ENCODE measurements at regions of chr6 and their contacts with region 1.

Region 1: DNA sequence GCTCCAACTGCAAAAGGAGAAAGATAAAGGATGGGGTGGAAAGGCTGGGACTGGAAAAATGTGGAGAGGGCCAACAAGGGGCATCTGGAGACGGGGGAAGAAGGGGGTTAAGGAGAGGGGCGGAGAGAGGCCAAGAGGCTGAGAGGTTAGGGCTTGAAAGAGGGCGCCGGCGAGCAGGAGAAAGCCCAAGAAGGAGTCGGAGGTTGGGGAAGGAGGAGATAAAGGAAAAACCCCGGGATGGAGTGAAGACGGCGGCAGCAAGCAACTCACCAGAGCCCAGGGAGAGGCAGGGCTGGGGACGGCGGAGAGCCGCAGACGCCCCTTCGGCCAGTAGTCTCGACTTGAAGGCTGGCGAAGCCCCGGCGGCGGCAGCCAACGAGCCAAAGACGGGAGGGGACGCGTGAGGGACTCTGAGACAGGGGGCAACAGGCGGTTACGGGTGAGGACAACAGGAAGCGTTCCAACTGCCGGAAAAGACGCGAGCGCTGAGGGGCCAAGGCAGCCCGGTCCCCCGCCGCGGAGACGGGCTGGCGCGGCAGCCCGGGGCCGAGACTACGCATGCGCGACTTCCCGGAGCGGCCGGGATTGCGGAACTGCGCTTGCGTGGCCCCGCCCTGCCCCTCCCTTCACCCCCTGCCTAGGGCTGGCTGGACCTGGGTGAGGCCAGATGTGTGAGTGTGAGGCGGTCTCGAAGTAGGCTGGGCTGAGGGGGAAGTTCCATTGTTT is at the start of gene STK38:
- DNase-seq: peak; percentile 95 to 98
- ATAC-seq: peak; percentile 97
- H3K4me3 ChIP-seq: peak within 1 kb of the TSS; percentile 55 to 86
- H3K27ac ChIP-seq: peak within 1 kb of the TSS; percentile 68 to 94
- H3K4me1 ChIP-seq: peaks cover 0 to 7% of the 10 kb centered on the region in 2 donors
- H3K27me3 ChIP-seq: no peaks in the 10 kb centered on the region
- total RNA-seq, gene STK38: 25.2 to 38.0 TPM

Region 2: DNA sequence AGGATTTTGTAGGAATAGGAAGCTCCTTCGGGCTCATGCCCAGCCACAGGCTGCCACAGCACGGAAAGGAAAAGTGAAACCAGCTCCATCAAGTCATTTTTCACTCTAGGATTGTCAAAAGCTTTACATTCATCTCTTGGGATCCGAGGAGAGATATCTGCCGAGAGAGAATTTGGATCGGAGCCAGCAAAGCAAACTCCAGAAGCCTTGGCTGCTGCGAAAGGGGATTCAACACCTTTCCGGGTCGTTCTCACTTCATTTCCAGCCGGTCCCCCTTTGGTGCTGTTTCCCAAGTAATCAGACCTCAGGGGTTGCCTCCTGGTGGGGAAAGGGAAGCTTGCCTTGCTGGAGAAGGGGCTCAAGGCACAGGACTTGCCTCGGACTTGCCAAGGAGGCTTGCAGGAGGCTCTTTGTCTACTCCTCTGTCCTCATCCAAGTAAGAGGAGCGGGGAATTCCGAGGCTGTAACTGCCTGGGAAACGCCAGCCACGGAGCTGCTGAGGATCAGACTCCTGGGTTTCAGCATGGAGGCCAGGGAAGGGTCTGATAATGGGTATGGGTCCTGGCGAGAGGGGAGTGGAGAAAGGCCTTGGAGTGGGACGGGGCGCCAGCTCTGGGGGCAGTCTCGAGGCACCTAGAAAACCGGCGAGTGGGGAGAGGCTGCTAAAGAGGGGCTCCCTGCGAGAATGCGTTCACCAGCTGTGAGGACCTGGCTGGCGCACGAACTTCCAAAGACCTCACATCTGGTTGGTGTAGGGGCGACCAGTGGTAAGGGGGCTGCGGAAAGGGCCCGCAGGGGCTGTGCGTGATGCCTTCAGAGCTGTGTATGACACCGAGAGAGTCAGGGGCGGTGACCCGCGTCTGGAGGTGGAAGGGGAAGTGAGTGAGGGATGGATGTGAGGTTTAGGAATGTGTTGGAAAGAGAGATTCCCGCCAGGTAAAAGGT is 160.3 kb before region 1 on chr6:
- intact Hi-C with region 1: loop called in 1 of 2 experiments (anchors 5 kb)
- DNase-seq: peak; percentile 59 to 77
- ATAC-seq: peak; percentile 47
- H3K4me3 ChIP-seq: peak overlapping the region; percentile 58 to 86
- H3K27ac ChIP-seq: peak overlapping the region; percentile 20 to 35
- H3K4me1 ChIP-seq: no peaks in the 10 kb centered on the region
- H3K27me3 ChIP-seq: no peaks in the 10 kb centered on the region

Region 3: DNA sequence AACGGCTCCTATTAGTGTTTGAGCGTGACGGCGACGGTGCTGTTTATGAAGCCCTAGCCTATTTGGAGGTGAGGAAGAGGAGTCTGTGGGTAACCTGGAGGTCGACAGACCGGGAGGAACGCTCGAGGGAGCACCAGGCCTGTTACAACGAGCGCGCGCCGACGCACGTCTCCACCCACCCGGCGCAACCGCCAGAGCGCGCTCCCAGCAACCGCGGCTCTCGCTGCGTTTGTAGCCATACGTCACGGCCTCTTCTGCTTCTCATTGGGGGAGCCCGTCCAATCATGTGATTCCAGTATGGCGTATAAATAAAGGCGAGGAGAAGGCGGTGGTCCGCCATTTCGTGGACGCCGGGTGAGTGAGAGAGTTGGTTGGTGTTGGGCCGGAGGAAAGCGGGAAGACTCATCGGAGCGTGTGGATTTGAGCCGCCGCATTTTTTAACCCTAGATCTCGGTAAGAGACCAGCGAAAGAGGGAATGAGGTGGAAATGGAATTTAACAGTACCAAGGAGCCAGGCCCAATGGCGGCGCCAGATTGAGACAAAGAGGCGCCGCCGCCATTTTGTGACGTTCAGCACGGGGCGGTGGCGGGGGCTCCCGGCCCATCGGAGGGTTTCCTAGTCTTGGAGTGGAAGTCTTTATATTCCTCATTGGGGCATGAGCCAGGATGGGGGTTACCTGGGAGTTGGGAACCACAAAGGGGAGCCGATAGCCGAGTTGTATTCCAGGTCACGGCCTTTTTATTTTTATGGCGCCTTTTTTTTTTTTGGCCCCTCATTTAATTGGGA is 47.1 kb after region 1 on chr6 and contains the start of gene SRSF3:
- intact Hi-C with region 1: loop called (anchors 5 kb)
- DNase-seq: peak; percentile 98 to 99
- ATAC-seq: peak; percentile 99
- H3K4me3 ChIP-seq: peak within 1 kb of the TSS; percentile 88 to 98
- H3K27ac ChIP-seq: peak within 1 kb of the TSS; percentile 73 to 93
- H3K4me1 ChIP-seq: peaks cover 4 to 9% of the 10 kb centered on the region in 2 donors
- H3K27me3 ChIP-seq: no peaks in the 10 kb centered on the region
- total RNA-seq, gene SRSF3: 190 to 197 TPM